ENCODE measurements at regions of chr2 and their contacts with region 1.

Region 1: DNA sequence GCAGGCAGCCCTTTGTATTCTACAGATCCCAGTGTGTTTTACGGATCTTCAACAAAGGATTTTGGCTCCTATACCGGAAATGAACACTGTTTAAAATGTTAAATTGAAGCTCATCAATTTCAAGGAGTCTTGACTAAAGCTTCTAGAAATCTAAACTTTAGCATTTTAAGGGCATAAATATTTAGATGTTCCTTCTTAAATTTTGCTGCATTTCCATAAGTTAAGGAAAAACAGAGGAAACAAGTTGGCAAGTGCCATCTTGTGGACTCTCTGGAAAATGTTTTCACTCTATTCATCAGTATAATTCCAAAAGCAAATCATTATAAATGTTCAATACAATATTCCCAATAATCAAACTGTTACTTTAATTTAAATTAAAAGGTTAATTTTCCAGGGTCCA is 19.6 kb downstream of the CHN1 start:
- DNase-seq: no peak
- H3K4me3 ChIP-seq: no peak overlapping the region
- H3K27ac ChIP-seq: no peak overlapping the region
- H3K27me3 ChIP-seq: no peaks in the 10 kb centered on the region
- CTCF ChIP-seq: peak; percentile 74

Region 2: DNA sequence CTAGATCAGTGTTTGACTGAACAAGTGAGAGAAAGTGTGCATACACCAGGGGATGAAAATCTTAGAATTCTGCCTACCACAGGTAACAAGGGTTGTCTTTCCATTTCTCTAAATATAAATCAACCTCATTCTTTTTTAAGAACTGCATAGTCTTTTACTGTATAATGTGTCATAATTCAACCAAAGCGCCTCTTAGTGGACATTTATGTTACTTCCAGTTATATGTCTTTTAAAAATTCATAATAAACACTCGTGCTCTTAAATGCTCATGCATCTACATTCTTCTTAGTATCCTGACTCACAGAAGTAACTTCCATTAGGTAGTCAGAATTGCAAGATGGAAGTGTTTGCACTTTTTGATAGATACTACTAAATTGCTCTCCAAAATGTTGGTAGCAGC is 297.6 kb before region 1 on chr2:
- CTCF ChIA-PET with region 1: interaction called, 11 read pairs
- POLR2A ChIA-PET with region 1: interaction called, 4 read pairs
- DNase-seq: no peak
- H3K4me3 ChIP-seq: no peak overlapping the region
- H3K27ac ChIP-seq: no peak overlapping the region
- H3K27me3 ChIP-seq: peaks cover 6% of the 10 kb centered on the region
- CTCF ChIP-seq: peak; percentile 55

Region 3: DNA sequence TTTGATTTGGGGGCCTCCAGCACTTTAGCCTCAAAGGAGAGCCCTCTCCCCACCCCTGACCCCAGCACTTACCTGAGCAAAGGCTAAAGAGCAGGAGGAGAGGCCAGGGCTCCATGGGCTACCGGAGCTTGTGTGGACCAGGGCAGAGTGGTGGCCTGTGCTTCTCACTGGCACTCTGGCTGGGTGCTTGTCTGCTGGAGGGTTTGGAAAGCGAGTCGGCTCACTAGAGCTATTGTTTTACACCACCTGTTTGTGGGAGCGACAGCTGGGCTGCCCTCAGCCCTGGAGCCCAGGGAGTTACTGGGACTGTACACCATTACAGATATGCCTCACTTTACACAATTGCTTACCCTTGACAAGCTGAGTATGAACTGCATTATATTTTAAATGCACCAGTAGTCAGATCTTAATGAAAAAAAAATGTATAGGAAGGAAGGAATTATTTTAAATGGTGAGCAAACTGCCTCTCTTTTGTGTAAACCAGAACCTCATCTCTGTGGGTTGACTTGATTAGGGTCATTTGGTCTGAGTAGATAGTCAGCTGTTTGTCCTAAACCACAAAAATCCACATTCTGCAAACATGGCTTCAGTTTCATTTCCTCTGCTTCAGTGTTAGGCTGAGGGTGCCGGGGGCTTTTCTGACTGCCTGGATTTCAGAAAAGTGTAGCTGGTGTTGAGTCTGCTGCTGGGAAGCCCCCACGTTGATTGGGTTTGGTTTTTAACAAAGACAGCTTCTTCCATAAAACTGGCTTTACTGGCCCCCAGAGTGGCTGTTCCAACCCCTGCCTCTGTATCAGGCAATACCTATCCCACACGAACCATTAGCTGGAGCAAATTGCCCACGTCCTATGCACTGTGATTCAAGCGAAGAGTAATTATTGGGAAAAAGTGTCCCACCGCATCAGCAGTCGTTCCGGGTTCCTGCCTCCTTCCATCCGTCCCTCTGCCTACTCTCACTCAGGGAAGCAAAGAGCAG is 221.1 kb before region 1 on chr2 and contains the start of gene CHRNA1:
- CTCF ChIA-PET with region 1: interaction called, 383 read pairs
- POLR2A ChIA-PET with region 1: interaction called, 3 read pairs
- DNase-seq: no peak
- H3K4me3 ChIP-seq: no peak within 1 kb of the TSS
- H3K27ac ChIP-seq: peak within 1 kb of the TSS; percentile 82
- H3K27me3 ChIP-seq: no peaks in the 10 kb centered on the region
- CTCF ChIP-seq: no peak
- polyA plus RNA-seq, gene CHRNA1: 2.6 and 2.7 TPM in 2 replicates

Region 4: GRCh38 chr2:174778085-174778981 is 207.3 kb before region 1 on chr2:
- CTCF ChIA-PET with region 1: interaction called, 383 read pairs
- POLR2A ChIA-PET with region 1: no interaction called
- DNase-seq: peak; percentile 97
- H3K4me3 ChIP-seq: no peak overlapping the region
- H3K27ac ChIP-seq: peak overlapping the region; percentile 98
- H3K27me3 ChIP-seq: no peaks in the 10 kb centered on the region
- CTCF ChIP-seq: no peak

Region 5: GRCh38 chr2:174846941-174847938 is 138.4 kb before region 1 on chr2:
- CTCF ChIA-PET with region 1: interaction called, 12 read pairs
- POLR2A ChIA-PET with region 1: no interaction called
- DNase-seq: peak; percentile 78
- H3K4me3 ChIP-seq: peak overlapping the region; percentile 70
- H3K27ac ChIP-seq: peak overlapping the region; percentile 49
- H3K27me3 ChIP-seq: no peaks in the 10 kb centered on the region
- CTCF ChIP-seq: no peak

Region 6: DNA sequence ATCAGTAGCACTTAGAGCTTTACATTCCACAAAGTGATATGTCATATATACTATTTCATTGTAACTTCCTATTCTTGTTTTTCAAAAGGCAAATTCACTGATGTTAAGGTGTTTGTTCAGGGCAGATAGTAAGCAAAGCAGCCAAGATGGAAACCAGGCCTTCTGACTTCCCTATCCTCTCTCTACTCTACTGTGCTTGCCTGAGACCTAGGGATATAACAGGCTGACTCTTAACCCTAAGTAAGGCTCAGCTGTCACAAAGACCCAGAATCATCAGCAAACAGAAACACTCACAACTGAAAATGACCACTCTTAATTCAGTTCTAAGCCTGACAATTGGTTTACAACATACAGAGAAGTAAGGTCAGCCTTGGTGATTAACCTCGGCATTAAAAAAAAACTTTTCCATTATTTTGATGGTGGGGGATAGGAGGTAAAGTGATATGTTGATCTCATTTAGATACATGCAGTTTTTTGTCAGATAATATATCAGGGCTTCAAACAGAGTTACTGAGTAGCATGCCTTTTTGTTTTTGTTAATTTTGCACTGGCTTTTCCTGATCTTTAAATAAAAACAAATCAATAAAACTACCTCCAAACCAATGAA is 126.0 kb before region 1 on chr2:
- CTCF ChIA-PET with region 1: no interaction called
- POLR2A ChIA-PET with region 1: no interaction called
- DNase-seq: no peak
- H3K4me3 ChIP-seq: no peak overlapping the region
- H3K27ac ChIP-seq: no peak overlapping the region
- H3K27me3 ChIP-seq: no peaks in the 10 kb centered on the region
- CTCF ChIP-seq: no peak

Region 7: DNA sequence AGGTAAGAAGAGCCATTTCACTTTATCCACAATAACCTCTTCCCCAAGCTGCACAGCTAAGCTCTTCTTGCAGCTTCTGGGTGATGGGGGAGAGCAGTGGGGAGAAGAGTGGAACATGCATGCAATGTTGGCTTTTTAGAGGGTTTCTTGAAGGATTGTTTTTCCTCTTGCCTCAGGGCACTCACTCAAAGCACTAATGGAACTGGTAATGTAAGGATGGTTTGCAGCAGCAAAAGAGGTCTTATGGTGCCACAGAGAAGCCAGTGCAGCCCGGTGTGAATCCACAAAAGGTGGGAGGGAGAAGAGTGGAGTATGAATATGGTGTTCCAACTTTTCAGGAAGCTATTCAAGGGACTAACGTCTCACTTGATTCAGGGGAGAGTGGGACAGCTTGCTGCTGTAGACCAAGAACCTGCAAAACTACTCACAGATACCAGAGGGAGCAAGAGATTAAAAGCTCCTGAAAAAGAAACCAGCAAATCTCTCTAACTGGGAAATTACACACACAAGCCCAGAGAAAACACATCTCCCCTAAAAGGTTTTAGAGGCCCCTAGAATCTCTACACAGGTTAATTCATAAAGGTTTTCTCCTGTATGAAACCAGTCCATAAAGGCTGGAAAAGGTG is 96.9 kb before region 1 on chr2:
- CTCF ChIA-PET with region 1: interaction called, 15 read pairs
- POLR2A ChIA-PET with region 1: no interaction called
- DNase-seq: no peak
- H3K4me3 ChIP-seq: no peak overlapping the region
- H3K27ac ChIP-seq: no peak overlapping the region
- H3K27me3 ChIP-seq: no peaks in the 10 kb centered on the region
- CTCF ChIP-seq: peak; percentile 31

Region 8: GRCh38 chr2:175004980-175005732 is 19.5 kb after region 1 on chr2 and contains the start of gene CHN1:
- CTCF ChIA-PET with region 1: interaction called, 11 read pairs
- POLR2A ChIA-PET with region 1: no interaction called
- DNase-seq: peak; percentile 45
- H3K4me3 ChIP-seq: peak within 1 kb of the TSS; percentile 66
- H3K27ac ChIP-seq: no peak within 1 kb of the TSS
- H3K27me3 ChIP-seq: peaks cover 14% of the 10 kb centered on the region
- CTCF ChIP-seq: peak; percentile 19
- polyA plus RNA-seq, gene CHN1: 207 and 258 TPM in 2 replicates